ENCODE measurements at regions of chr9 and their contacts with region 1.

Region 1: DNA sequence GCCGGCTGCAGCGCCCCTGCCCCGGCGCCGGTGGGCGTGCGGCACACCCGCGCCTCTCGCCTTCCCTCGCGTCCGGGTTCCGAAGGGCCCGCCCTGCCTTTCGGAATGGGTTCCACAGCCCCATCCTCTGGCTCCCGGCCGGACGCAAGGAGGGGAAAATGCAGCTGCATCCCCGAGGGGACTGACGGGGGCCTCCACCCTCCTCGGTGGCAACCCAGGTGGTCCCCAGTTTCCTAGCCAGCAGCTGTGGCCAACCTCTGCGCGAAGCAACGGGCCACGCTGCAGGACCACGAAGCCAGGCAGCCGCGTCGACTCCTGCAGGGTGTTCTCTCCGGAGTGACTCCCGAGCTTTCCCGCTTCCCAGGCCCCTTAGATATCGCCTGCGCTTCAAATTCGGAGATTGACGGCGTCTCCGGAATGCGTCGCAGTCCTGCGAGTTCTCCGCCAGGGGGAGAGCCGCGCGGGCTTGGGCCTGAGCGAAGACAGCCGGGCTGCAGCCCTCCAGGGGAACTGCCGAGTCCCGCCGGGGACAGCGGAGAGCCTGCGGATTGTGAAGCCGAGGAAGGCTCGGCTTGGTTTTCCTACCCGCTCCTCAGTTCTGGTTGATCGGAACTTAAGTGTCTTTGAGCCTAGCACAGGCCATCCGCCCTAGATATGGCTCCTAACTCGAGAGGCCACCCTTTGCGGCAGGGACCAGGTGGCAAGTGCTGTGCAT is 582 bp upstream of the APBA1 start:
- DNase-seq: peak; percentile 67 to 95 (median 88)

Region 2: GRCh38 chr9:69759421-69760277 is 86.9 kb after region 1 on chr9 and contains the start of gene PTAR1:
- intact Hi-C with region 1: loop called (anchors 2 kb)
- DNase-seq: peak; percentile 76 to 96 (median 90)